ENCODE measurements at regions of chr16 and their contacts with region 1.

Region 1: DNA sequence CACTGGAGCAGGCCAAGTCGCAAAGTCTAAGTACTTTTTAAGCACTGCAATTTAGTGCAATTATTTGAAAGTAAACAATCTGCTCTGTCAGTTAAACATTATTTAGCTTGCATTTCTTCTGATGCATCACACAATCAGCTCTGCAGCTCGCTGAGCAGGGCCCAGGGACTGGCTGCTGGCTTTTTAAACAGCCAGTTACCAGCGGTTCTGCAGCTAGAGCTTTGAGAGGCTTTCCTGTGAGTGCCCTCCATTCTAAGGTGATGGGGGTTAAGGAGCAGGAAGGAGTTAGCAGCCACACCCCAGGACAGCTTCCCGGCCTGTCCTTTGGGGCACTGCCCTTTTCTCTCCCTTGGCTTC is 154.3 kb downstream of the SALL1 start:
- DNase-seq: no peak
- ATAC-seq: peak; percentile 73
- H3K4me3 ChIP-seq: no peak overlapping the region
- H3K27ac ChIP-seq: no peak overlapping the region
- H3K4me1 ChIP-seq: peaks cover 12% of the 10 kb centered on the region
- H3K27me3 ChIP-seq: peaks cover 0 to 9% of the 10 kb centered on the region in 2 experiments; a peak in 2 of 5 replicates
- CTCF ChIP-seq: no peak
- EP300 ChIP-seq: no peak
- POLR2A ChIP-seq: no peak
- RAD21 ChIP-seq: no peak

Region 2: DNA sequence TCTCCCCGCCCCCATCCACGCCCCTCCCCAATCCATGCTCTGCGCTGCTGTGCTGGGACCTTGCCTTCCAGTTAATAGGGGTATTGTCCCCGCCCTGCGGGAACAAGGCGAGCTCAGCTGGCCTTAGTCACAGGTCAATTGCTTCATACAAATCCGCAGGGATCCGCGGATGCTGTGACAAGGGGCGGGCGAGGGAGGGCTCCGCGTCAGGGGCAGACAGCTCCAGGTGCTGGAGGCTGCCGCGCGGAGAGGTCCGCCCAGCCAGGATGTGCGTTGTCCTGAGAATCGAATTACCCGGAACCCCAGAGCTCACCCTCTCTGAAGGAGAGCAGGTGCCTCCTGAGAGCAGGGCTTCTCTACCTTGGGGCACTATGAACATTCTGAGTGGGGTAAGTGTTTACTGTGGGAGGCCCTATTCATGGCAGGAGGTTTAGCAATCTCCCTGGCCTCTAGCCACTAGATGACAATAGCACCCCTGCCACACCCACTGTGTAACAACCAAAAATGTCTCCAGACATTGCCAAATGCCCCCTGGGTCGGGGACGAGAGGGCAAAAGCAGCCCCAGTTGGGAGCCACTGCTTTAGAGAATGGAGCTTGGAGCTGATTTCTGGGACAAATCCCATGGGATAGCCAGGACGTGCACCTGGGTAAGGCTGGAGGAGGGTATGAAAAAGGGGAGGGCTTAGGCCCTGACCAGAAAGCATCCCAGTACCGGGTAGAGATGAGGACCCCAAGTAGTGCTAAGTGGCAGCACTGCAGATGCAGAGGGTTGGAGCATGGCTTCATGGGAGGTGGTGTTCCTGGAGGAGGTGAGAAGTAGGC is 116.7 kb before region 1 on chr16:
- CTCF ChIA-PET with region 1: no interaction called
- POLR2A ChIA-PET with region 1: no interaction called
- in situ Hi-C with region 1: no loop called
- intact Hi-C with region 1: no loop called
- DNase-seq: no peak
- ATAC-seq: no peak
- H3K4me3 ChIP-seq: no peak overlapping the region
- H3K27ac ChIP-seq: no peak overlapping the region
- H3K4me1 ChIP-seq: no peaks in the 10 kb centered on the region
- H3K27me3 ChIP-seq: peaks cover 2 to 4% of the 10 kb centered on the region in 2 experiments; a peak in 3 of 5 replicates
- CTCF ChIP-seq: no peak
- EP300 ChIP-seq: no peak
- POLR2A ChIP-seq: no peak
- RAD21 ChIP-seq: no peak

Region 3: DNA sequence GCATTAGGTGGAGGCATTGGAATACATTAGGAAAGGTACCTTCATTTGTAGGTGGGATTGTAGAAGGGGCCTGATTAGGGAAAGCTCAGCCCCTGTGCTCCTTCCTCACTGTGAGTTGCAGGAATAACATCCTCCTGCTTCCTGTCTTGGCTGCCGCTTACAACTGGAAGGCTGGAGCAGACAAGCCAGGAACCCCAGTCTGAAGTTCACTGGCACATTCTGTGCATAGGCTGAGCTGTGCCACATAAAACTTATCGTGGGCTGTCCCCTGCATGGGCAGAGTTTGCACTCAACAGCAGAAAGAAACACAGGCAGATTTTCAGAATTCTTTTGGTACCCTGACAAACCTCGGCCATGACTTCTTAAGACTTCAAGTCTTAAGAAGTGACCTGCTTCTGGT is 45.9 kb before region 1 on chr16:
- CTCF ChIA-PET with region 1: no interaction called
- POLR2A ChIA-PET with region 1: no interaction called
- in situ Hi-C with region 1: no loop called
- intact Hi-C with region 1: loop called (anchors 1 kb)
- DNase-seq: no peak
- ATAC-seq: no peak
- H3K4me3 ChIP-seq: no peak overlapping the region
- H3K27ac ChIP-seq: no peak overlapping the region
- H3K4me1 ChIP-seq: no peaks in the 10 kb centered on the region
- H3K27me3 ChIP-seq: no peaks in the 10 kb centered on the region; a peak in 2 of 5 replicates
- CTCF ChIP-seq: no peak
- EP300 ChIP-seq: no peak
- POLR2A ChIP-seq: no peak
- RAD21 ChIP-seq: no peak

Measured in HepG2 (cell line).